ENCODE measurements at regions of chr6 and their contacts with region 1.

Region 1: GRCh38 chr6:127120787-127121636 is 2.5 kb downstream of the RSPO3 start:
- DNase-seq: peak; percentile 81 to 87
- H3K4me3 ChIP-seq: no peak overlapping the region
- H3K4me3 Mint-ChIP-seq: no peak overlapping the region
- H3K27ac Mint-ChIP-seq: peak overlapping the region; percentile 22
- H3K4me1 ChIP-seq: 0 out of 2 replicates have a peak, but pooled peaks cover 2% of the 10 kb centered on the region
- H3K4me1 Mint-ChIP-seq: peaks cover 14% of the 10 kb centered on the region
- H3K27me3 ChIP-seq: no peaks in the 10 kb centered on the region
- H3K27me3 Mint-ChIP-seq: no peaks in the 10 kb centered on the region
- CTCF ChIP-seq: peak; percentile 83 to 88

Region 2: DNA sequence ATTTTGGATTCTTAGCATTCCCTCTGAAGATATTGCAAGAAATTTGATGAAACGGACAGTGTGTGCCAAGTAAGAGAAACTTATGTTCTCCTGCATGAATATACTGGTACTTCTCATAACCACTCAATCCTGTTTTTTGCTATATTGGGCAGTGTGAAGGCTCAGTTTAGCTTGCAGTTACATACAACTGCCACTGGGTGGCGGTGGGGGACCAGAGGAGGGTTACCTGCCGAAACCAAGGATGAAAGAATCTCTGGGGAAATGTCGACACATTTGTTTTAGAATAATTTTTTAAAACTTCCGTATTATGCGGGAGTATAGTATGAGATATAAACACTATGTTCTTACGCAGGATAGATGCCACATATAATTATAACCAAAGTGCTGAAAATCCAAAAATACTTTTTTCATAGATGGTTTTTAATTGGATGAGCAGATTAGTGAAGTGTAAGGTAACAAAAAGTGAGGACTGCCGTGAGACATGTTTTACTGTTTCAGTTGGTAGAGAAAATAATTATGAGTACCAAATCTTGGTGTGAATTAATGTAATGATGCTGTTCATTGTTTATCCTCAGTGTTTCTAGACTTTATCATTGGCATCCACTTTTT is 1124.9 kb before region 1 on chr6:
- CTCF ChIA-PET with region 1: no interaction called
- POLR2A ChIA-PET with region 1: no interaction called
- intact Hi-C with region 1: loop called (anchors 1 kb)
- DNase-seq: peak; percentile 45 to 82
- H3K4me3 ChIP-seq: no peak overlapping the region
- H3K4me3 Mint-ChIP-seq: no peak overlapping the region
- H3K27ac Mint-ChIP-seq: no peak overlapping the region
- H3K4me1 ChIP-seq: no peaks in the 10 kb centered on the region
- H3K4me1 Mint-ChIP-seq: peaks cover 7% of the 10 kb centered on the region
- H3K27me3 ChIP-seq: no peaks in the 10 kb centered on the region
- H3K27me3 Mint-ChIP-seq: no peaks in the 10 kb centered on the region
- CTCF ChIP-seq: peak; percentile 90 to 94

Region 3: GRCh38 chr6:126127659-126128058 is 993.4 kb before region 1 on chr6:
- CTCF ChIA-PET with region 1: no interaction called
- POLR2A ChIA-PET with region 1: no interaction called
- intact Hi-C with region 1: loop called (anchors 1 kb)
- DNase-seq: peak in 1 of 2 experiments; percentile 27
- H3K4me3 ChIP-seq: no peak overlapping the region
- H3K4me3 Mint-ChIP-seq: no peak overlapping the region
- H3K27ac Mint-ChIP-seq: no peak overlapping the region
- H3K4me1 ChIP-seq: no peaks in the 10 kb centered on the region
- H3K4me1 Mint-ChIP-seq: no peaks in the 10 kb centered on the region
- H3K27me3 ChIP-seq: no peaks in the 10 kb centered on the region
- H3K27me3 Mint-ChIP-seq: no peaks in the 10 kb centered on the region
- CTCF ChIP-seq: peak in 1 of 2 experiments; percentile 23

Region 4: GRCh38 chr6:126339796-126340609 is 781.0 kb before region 1 on chr6 and contains the start of gene CENPW:
- CTCF ChIA-PET with region 1: no interaction called
- POLR2A ChIA-PET with region 1: no interaction called
- intact Hi-C with region 1: loop called (anchors 5 kb)
- DNase-seq: peak; percentile 94 to 96
- H3K4me3 ChIP-seq: peak within 1 kb of the TSS; percentile 79
- H3K4me3 Mint-ChIP-seq: no peak within 1 kb of the TSS
- H3K27ac Mint-ChIP-seq: no peak within 1 kb of the TSS
- H3K4me1 ChIP-seq: 0 out of 2 replicates have a peak, but pooled peaks cover 4% of the 10 kb centered on the region
- H3K4me1 Mint-ChIP-seq: peaks cover 15% of the 10 kb centered on the region
- H3K27me3 ChIP-seq: no peaks in the 10 kb centered on the region
- H3K27me3 Mint-ChIP-seq: no peaks in the 10 kb centered on the region
- CTCF ChIP-seq: no peak
- total RNA-seq, gene CENPW: 64.4 and 70.7 TPM in 2 replicates

Region 5: DNA sequence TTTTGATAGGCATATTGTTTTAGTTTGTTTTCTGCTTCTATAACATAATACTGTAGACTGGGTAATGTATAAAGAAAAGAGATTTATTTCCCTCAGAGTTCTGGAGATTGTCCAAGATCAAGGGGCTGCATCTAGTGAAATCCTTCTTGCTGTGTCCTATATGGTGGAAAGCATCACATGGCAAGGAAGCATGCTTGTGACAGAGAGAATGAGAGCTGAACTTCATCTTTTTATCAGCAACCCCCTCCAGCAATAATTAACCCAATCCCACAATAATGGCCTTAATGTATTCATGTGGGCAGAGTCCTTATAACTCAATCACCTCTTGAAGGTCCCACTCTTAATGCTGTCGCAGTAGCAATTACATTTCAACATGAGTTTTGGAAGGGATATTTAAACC is 639.7 kb before region 1 on chr6:
- CTCF ChIA-PET with region 1: no interaction called
- POLR2A ChIA-PET with region 1: no interaction called
- intact Hi-C with region 1: loop called (anchors 10 kb)
- DNase-seq: no peak
- H3K4me3 ChIP-seq: no peak overlapping the region
- H3K4me3 Mint-ChIP-seq: no peak overlapping the region
- H3K27ac Mint-ChIP-seq: no peak overlapping the region
- H3K4me1 ChIP-seq: no peaks in the 10 kb centered on the region
- H3K4me1 Mint-ChIP-seq: no peaks in the 10 kb centered on the region
- H3K27me3 ChIP-seq: no peaks in the 10 kb centered on the region
- H3K27me3 Mint-ChIP-seq: no peaks in the 10 kb centered on the region
- CTCF ChIP-seq: no peak

Region 6: DNA sequence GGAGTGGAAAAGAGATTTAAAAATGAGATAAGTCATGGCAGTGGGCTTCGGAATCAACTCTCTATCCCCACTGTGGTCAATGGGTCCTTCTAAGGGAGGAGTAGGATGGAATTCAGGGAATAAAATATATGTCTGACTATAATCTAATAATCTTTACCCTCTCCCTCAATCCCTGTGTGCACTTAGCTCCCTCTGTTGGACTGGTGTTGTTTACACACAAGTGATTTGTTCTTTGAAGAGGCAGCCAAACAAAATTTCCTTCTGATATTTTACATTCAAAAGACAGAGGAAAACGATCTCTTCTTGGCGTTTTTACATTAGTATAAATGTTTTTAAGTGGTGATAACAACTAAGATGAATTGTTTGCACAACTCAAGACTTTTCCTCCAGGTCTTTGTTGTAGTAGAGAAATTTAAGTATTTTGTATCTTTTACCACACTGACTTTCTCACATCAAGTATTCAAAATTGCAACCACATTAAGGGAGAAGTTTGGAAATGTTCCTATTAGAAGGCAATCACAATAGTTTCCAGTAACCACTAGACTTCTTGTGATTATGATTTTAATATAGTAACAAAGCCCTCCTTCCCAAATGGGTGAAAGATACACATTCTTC is 463.3 kb before region 1 on chr6:
- CTCF ChIA-PET with region 1: no interaction called
- POLR2A ChIA-PET with region 1: no interaction called
- intact Hi-C with region 1: loop called (anchors 5 kb)
- DNase-seq: peak in 1 of 2 experiments; percentile 8
- H3K4me3 ChIP-seq: no peak overlapping the region
- H3K4me3 Mint-ChIP-seq: no peak overlapping the region
- H3K27ac Mint-ChIP-seq: no peak overlapping the region
- H3K4me1 ChIP-seq: no peaks in the 10 kb centered on the region
- H3K4me1 Mint-ChIP-seq: no peaks in the 10 kb centered on the region
- H3K27me3 ChIP-seq: no peaks in the 10 kb centered on the region
- H3K27me3 Mint-ChIP-seq: no peaks in the 10 kb centered on the region
- CTCF ChIP-seq: peak; percentile 20 to 25

Measured in Caco-2 (cell line).